Heart right ventricle (tissue), 16 donors: ENCODE measurements at regions of chr4 and their contacts with region 1.

Region 1: GRCh38 chr4:128979934-128980333 is 113.4 kb downstream of the SCLT1 start:
- DNase-seq: no peak
- ATAC-seq: no peak
- H3K4me3 ChIP-seq: no peak overlapping the region
- H3K27ac ChIP-seq: no peak overlapping the region
- H3K4me1 ChIP-seq: no peaks in the 10 kb centered on the region
- H3K27me3 ChIP-seq: no peaks in the 10 kb centered on the region
- CTCF ChIP-seq: no peak

Region 2: DNA sequence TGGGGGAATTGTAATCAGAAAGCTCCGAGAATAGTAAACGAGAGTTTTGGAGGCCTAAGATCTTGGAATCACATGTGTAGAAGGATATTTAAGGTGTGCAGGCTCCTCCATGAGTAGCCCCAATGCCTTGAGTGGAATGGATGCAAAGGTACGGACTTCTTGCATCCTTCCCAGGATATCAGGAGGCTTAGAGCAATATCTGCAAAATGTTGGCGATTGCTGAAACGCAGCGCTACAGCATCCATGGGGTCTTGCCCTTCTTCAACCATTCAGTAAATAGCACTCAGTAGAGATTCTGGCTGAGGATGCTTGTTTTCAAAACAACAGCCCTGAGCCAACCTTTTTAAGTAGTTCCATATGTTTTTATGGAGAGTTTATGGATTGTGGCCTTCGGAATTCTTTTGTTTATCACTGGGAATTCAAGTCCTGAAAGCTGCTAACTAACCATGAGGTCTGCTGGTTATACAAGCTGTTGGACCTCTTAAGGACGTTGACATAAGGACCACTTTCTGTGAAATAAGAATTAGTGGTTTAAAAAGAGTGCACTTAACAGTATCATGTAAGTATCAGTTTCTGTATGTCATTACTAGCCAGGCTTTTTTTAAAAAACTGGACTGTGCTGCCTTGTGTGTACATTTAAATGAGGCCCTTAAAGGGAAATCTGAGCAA is 463.5 kb before region 1 on chr4:
- intact Hi-C with region 1: no loop called
- DNase-seq: no peak
- ATAC-seq: no peak
- H3K4me3 ChIP-seq: no peak overlapping the region
- H3K27ac ChIP-seq: peak overlapping the region in 2 of 10 donors; percentile 28 to 71
- H3K4me1 ChIP-seq: peaks cover 8 to 40% (median 31%) of the 10 kb centered on the region in 9 donors
- H3K27me3 ChIP-seq: no peaks in the 10 kb centered on the region
- CTCF ChIP-seq: no peak

Region 3: GRCh38 chr4:128951316-128951715 is 28.6 kb before region 1 on chr4:
- intact Hi-C with region 1: loop called in 1 of 10 experiments (anchors 2 kb)
- DNase-seq: no peak
- ATAC-seq: no peak
- H3K4me3 ChIP-seq: no peak overlapping the region
- H3K27ac ChIP-seq: no peak overlapping the region
- H3K4me1 ChIP-seq: no peaks in the 10 kb centered on the region
- H3K27me3 ChIP-seq: no peaks in the 10 kb centered on the region
- CTCF ChIP-seq: peak in 1 of 9 donors; percentile 1